ENCODE measurements at regions of chr15 and their contacts with region 1.

Region 1: GRCh38 chr15:92881802-92882696 is 18.1 kb upstream of the CHD2 start:
- DNase-seq: peak; percentile 100
- ATAC-seq: peak; percentile 90
- H3K4me3 ChIP-seq: peak overlapping the region; percentile 62
- H3K27ac ChIP-seq: peak overlapping the region; percentile 96
- H3K4me1 ChIP-seq: peaks cover 5% of the 10 kb centered on the region; the same call in 1 of the 2 replicates
- H3K27me3 ChIP-seq: no peaks in the 10 kb centered on the region
- CTCF ChIP-seq: no peak
- EP300 ChIP-seq: no peak
- POLR2A ChIP-seq: peak; percentile 77
- RAD21 ChIP-seq: no peak

Region 2: GRCh38 chr15:92820236-92821021 is 61.6 kb before region 1 on chr15:
- CTCF ChIA-PET with region 1: interaction called, 6 read pairs
- POLR2A ChIA-PET with region 1: interaction called, 19 read pairs
- RAD21 ChIA-PET with region 1: interaction called, 19 read pairs
- SMC1A ChIA-PET with region 1: interaction called, 19 read pairs
- in situ Hi-C with region 1: loop called (anchors 10 kb)
- intact Hi-C with region 1: no loop called
- DNase-seq: no peak
- ATAC-seq: peak; percentile 94
- H3K4me3 ChIP-seq: peak overlapping the region; percentile 64
- H3K27ac ChIP-seq: peak overlapping the region; percentile 85
- H3K4me1 ChIP-seq: peaks cover 28% of the 10 kb centered on the region
- H3K27me3 ChIP-seq: no peaks in the 10 kb centered on the region
- CTCF ChIP-seq: no peak
- EP300 ChIP-seq: no peak
- POLR2A ChIP-seq: peak; percentile 59; the same call in 1 of the 2 replicates
- RAD21 ChIP-seq: no peak

Region 3: DNA sequence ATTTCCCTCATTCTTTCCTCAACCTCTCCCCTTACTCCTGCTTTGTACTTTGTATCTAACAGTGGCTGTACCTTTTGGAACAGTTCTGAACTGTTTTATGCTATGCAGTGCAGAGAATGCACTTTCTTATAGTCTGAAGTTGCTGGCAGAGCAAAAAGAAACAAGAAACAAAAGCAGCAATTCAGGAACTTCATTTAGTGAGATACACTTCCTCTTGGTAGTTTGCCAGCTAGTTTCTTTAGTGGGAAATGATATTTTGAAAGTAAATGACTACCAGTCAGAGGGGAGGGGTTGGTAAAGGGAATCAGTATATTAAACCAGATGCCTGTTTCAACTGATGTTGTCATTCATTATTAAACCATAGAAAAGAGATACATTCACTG is 36.9 kb before region 1 on chr15:
- CTCF ChIA-PET with region 1: interaction called, 5 read pairs
- POLR2A ChIA-PET with region 1: interaction called, 10 read pairs
- RAD21 ChIA-PET with region 1: interaction called, 7 read pairs
- SMC1A ChIA-PET with region 1: interaction called, 16 read pairs
- in situ Hi-C with region 1: no loop called
- intact Hi-C with region 1: loop called (anchors 5 kb)
- DNase-seq: peak; percentile 74
- ATAC-seq: peak; percentile 80
- H3K4me3 ChIP-seq: peak overlapping the region; percentile 34; the same call in 1 of the 2 replicates
- H3K27ac ChIP-seq: peak overlapping the region; percentile 80
- H3K4me1 ChIP-seq: peaks cover 21% of the 10 kb centered on the region
- H3K27me3 ChIP-seq: no peaks in the 10 kb centered on the region
- CTCF ChIP-seq: no peak
- EP300 ChIP-seq: no peak
- POLR2A ChIP-seq: no peak
- RAD21 ChIP-seq: no peak

Region 4: DNA sequence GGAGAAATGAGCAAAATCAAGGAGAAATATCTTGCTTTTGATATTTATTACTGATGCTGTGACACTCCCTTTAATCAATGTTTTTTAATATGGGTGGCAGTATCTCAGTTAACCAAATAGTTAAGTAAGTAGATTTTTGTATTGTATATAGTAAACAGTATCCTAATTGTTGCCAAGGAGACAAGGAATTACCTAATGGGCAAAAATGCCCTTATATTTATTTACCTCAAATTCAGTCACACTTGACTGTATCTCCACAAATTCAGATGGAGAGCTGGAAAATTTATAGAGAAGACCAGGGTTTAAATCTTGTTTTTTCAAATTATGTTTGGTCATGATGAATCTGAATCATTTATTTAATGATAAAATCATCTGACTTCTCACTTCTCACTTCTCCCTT is 14.5 kb after region 1 on chr15:
- CTCF ChIA-PET with region 1: interaction called, 19 read pairs
- POLR2A ChIA-PET with region 1: interaction called, 207 read pairs
- RAD21 ChIA-PET with region 1: interaction called, 100 read pairs
- SMC1A ChIA-PET with region 1: interaction called, 252 read pairs
- in situ Hi-C with region 1: no loop called
- intact Hi-C with region 1: loop called (anchors 2 kb)
- DNase-seq: no peak
- ATAC-seq: no peak
- H3K4me3 ChIP-seq: no peak overlapping the region
- H3K27ac ChIP-seq: no peak overlapping the region
- H3K4me1 ChIP-seq: no peaks in the 10 kb centered on the region
- H3K27me3 ChIP-seq: no peaks in the 10 kb centered on the region
- CTCF ChIP-seq: no peak
- EP300 ChIP-seq: no peak
- POLR2A ChIP-seq: no peak
- RAD21 ChIP-seq: no peak

Region 5: DNA sequence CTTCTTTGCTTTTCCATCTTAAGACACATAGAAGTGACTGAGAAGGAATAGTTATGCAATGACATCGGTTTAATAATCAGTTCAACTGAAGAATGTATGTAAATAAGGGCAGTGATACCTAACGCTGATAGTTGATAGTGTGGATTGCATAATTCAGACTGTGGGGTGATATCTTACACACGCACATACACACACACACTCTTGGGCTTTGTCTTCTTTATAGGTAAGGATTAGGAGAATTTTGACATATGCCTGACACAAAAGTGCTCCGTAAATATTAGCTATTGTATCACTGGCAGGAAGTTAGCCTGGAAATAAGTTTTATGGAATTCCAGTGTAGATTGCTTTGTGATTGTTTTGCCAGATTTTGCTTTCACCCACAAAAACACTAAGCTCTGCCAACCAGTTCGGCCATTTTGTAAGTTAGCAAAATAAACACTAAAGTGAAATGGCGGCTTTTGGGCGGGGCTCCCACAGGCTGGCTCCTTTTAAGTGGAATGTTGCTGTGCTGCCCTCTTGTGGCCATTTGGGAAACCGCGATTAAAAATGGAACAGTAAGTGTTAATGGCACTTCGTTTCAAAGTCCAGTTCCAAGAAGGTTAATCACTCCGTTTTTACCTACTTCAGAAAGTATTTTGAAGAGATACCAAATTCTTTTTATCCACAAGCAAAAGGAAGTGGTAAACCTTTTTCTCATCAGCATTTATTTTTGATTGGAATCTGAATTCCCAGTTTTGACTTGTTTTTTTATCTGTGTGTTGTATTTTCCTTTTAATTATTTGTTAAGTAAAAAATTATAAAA is 35.8 kb after region 1 on chr15:
- CTCF ChIA-PET with region 1: interaction called, 6 read pairs
- POLR2A ChIA-PET with region 1: interaction called, 25 read pairs
- RAD21 ChIA-PET with region 1: interaction called, 78 read pairs
- SMC1A ChIA-PET with region 1: interaction called, 31 read pairs
- in situ Hi-C with region 1: no loop called
- intact Hi-C with region 1: no loop called
- DNase-seq: peak; percentile 80
- ATAC-seq: peak; percentile 52
- H3K4me3 ChIP-seq: no peak overlapping the region
- H3K27ac ChIP-seq: peak overlapping the region; percentile 29; the same call in 1 of the 2 replicates
- H3K4me1 ChIP-seq: peaks cover 41% of the 10 kb centered on the region
- H3K27me3 ChIP-seq: no peaks in the 10 kb centered on the region
- CTCF ChIP-seq: peak; percentile 71 to 86 (median 84)
- EP300 ChIP-seq: 0 out of 4 replicates have a peak, but pooled peaks of 1 of the 2 experiments have one; percentile 12
- POLR2A ChIP-seq: no peak
- RAD21 ChIP-seq: peak; percentile 80